ENCODE measurements at regions of chr16 and their contacts with region 1.

Region 1: GRCh38 chr16:11797166-11797956 is at the start of gene ZC3H7A:
- DNase-seq: peak; percentile 96 to 98 (median 96)
- ATAC-seq: peak; percentile 96
- H3K4me3 ChIP-seq: peak within 1 kb of the TSS; percentile 76
- H3K27ac ChIP-seq: peak within 1 kb of the TSS; percentile 94
- H3K4me1 ChIP-seq: peaks cover 50 to 55% of the 10 kb centered on the region in 2 experiments
- H3K27me3 ChIP-seq: no peaks in the 10 kb centered on the region
- CTCF ChIP-seq: peak; percentile 45 to 75 (median 56); a peak in 5 of 6 replicates
- EP300 ChIP-seq: no peak; the same call in 1 of the 2 replicates
- POLR2A ChIP-seq: peak; percentile 96
- RAD21 ChIP-seq: no peak
- polyA plus RNA-seq, gene ZC3H7A: 22.5 to 23.1 TPM

Region 2: GRCh38 chr16:11682655-11683096 is 114.7 kb before region 1 on chr16:
- CTCF ChIA-PET with region 1: no interaction called
- POLR2A ChIA-PET with region 1: no interaction called
- in situ Hi-C with region 1: no loop called
- intact Hi-C with region 1: no loop called
- DNase-seq: no peak
- ATAC-seq: no peak
- H3K4me3 ChIP-seq: no peak overlapping the region
- H3K27ac ChIP-seq: peak overlapping the region; percentile 20; the same call in 1 of the 3 replicates
- H3K4me1 ChIP-seq: peaks cover 0 to 9% of the 10 kb centered on the region in 2 experiments; a peak in 1 of 5 replicates
- H3K27me3 ChIP-seq: no peaks in the 10 kb centered on the region
- CTCF ChIP-seq: no peak
- EP300 ChIP-seq: no peak
- POLR2A ChIP-seq: no peak
- RAD21 ChIP-seq: no peak

Region 3: DNA sequence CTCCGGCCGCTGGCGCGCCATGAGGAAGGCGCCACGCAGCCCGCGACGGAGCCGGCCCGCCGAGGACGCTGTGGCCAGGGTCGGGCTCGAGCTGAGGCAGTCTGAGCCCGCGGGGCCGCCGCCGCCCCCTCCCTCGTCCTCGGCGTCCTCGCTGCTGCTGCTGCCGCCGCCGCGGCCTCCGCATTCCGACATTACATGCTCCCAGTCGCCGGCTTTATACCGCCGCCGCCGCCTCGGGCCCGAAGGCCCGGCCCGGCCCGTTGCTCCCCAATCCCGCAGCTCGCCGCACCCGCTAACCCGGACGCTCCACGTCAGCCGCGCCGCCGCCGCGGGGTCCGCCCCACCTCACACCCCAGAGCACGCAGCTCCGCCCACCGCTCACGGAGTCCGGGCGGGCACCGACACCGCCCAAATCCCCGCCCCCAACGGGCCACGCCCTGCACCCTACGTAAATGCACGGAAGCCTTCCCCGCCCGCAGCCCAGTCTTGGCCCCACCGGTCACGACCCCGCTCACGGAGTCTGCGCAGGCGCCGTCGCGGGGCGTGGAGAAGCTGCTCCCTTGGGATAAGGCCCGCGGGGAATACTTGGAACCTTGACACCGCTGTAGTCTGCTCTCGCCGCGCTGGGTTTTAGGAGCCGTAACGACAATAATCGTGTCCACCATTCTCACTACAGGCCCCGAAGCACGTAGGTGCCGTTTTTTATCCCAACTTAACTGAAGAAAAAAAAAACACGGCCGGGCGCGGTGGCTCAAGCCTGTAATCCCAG is 54.6 kb before region 1 on chr16 and contains the start of gene TXNDC11:
- CTCF ChIA-PET with region 1: no interaction called
- POLR2A ChIA-PET with region 1: interaction called, 32 read pairs
- in situ Hi-C with region 1: no loop called
- intact Hi-C with region 1: loop called (anchors 2 kb)
- DNase-seq: peak; percentile 96 to 99 (median 96)
- ATAC-seq: peak; percentile 95
- H3K4me3 ChIP-seq: peak within 1 kb of the TSS; percentile 91
- H3K27ac ChIP-seq: peak within 1 kb of the TSS; percentile 95
- H3K4me1 ChIP-seq: peaks cover 18 to 20% of the 10 kb centered on the region in 2 experiments; a peak in 4 of 5 replicates
- H3K27me3 ChIP-seq: no peaks in the 10 kb centered on the region
- CTCF ChIP-seq: no peak
- EP300 ChIP-seq: no peak; the same call in 1 of the 2 replicates
- POLR2A ChIP-seq: peak; percentile 82
- RAD21 ChIP-seq: no peak
- polyA plus RNA-seq, gene TXNDC11: 0.66 to 2.3 TPM

Region 4: DNA sequence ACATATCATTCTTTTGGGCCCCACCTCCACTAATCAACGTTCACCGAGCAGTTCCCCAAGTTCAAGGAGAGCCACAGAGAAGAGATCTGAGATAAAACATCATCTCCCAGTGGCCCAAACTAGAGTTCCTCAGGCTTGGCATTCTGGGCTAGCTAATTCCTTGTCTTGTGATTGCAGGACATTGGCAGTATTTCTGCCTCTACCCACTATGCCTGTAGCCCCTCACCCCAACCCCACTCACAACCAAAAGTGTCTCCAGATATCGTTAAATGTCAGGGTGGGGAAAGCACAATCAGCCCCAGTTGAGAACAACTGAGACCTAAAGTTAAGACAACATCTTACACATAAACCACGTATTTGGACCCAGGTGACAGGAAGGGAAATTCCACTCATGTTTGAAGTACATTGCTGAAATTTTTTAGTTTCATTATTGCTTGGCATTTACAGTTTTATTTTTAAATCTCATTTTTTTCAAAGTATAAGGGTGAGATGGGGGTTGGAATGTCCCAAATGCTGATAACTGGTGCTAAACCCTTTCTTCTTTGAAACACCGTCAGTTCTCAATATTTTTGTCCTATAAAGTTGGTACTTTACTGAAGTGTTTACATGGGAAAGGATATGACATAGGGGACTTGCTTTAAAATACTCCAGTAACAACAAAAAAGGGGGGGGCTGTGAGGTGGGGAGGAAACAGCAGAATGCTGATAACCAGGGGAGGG is 13.9 kb before region 1 on chr16:
- CTCF ChIA-PET with region 1: no interaction called
- POLR2A ChIA-PET with region 1: interaction called, 21 read pairs
- in situ Hi-C with region 1: no loop called
- intact Hi-C with region 1: no loop called
- DNase-seq: peak; percentile 28 to 58 (median 38)
- ATAC-seq: peak; percentile 81
- H3K4me3 ChIP-seq: no peak overlapping the region
- H3K27ac ChIP-seq: peak overlapping the region; percentile 15; the same call in 2 of the 3 replicates
- H3K4me1 ChIP-seq: peaks cover 7 to 19% of the 10 kb centered on the region in 2 experiments
- H3K27me3 ChIP-seq: no peaks in the 10 kb centered on the region
- CTCF ChIP-seq: no peak
- EP300 ChIP-seq: peak; percentile 3; the same call in 1 of the 2 replicates
- POLR2A ChIP-seq: no peak
- RAD21 ChIP-seq: no peak

Region 5: GRCh38 chr16:11841026-11841425 is 43.7 kb after region 1 on chr16:
- CTCF ChIA-PET with region 1: no interaction called
- POLR2A ChIA-PET with region 1: interaction called, 11 read pairs
- in situ Hi-C with region 1: no loop called
- intact Hi-C with region 1: no loop called
- DNase-seq: no peak
- ATAC-seq: no peak
- H3K4me3 ChIP-seq: no peak overlapping the region
- H3K27ac ChIP-seq: no peak overlapping the region
- H3K4me1 ChIP-seq: peaks cover 0 to 2% of the 10 kb centered on the region in 2 experiments; a peak in 2 of 5 replicates
- H3K27me3 ChIP-seq: no peaks in the 10 kb centered on the region
- CTCF ChIP-seq: no peak
- EP300 ChIP-seq: no peak
- POLR2A ChIP-seq: no peak
- RAD21 ChIP-seq: no peak